AG04450 (cell line): ENCODE measurements at regions of chr16 and their contacts with region 1.

Region 1: GRCh38 chr16:1929578-1930337 is 11.5 kb upstream of the HS3ST6 start:
- DNase-seq: peak; percentile 32
- H3K4me3 ChIP-seq: peak overlapping the region; percentile 63
- H3K27ac ChIP-seq: no peak overlapping the region
- H3K27me3 ChIP-seq: peaks cover 9% of the 10 kb centered on the region
- CTCF ChIP-seq: peak; percentile 61

Region 2: GRCh38 chr16:1492923-1493745 is 436.6 kb before region 1 on chr16 and contains the start of gene TELO2:
- CTCF ChIA-PET with region 1: no interaction called
- POLR2A ChIA-PET with region 1: no interaction called
- DNase-seq: peak; percentile 42
- H3K4me3 ChIP-seq: peak within 1 kb of the TSS; percentile 75
- H3K27ac ChIP-seq: peak within 1 kb of the TSS; percentile 47
- H3K27me3 ChIP-seq: no peaks in the 10 kb centered on the region
- CTCF ChIP-seq: no peak
- polyA plus RNA-seq, gene TELO2: 6.2 and 7.4 TPM in 2 replicates

Region 3: GRCh38 chr16:1858189-1858865 is 71.4 kb before region 1 on chr16:
- CTCF ChIA-PET with region 1: interaction called, 83 read pairs
- POLR2A ChIA-PET with region 1: no interaction called
- DNase-seq: no peak
- H3K4me3 ChIP-seq: no peak overlapping the region
- H3K27ac ChIP-seq: no peak overlapping the region
- H3K27me3 ChIP-seq: peaks cover 44% of the 10 kb centered on the region
- CTCF ChIP-seq: no peak

Region 4: GRCh38 chr16:1863681-1864460 is 65.9 kb before region 1 on chr16:
- CTCF ChIA-PET with region 1: interaction called, 83 read pairs
- POLR2A ChIA-PET with region 1: no interaction called
- DNase-seq: no peak
- H3K4me3 ChIP-seq: no peak overlapping the region
- H3K27ac ChIP-seq: no peak overlapping the region
- H3K27me3 ChIP-seq: peaks cover 25% of the 10 kb centered on the region
- CTCF ChIP-seq: peak; percentile 60

Region 5: DNA sequence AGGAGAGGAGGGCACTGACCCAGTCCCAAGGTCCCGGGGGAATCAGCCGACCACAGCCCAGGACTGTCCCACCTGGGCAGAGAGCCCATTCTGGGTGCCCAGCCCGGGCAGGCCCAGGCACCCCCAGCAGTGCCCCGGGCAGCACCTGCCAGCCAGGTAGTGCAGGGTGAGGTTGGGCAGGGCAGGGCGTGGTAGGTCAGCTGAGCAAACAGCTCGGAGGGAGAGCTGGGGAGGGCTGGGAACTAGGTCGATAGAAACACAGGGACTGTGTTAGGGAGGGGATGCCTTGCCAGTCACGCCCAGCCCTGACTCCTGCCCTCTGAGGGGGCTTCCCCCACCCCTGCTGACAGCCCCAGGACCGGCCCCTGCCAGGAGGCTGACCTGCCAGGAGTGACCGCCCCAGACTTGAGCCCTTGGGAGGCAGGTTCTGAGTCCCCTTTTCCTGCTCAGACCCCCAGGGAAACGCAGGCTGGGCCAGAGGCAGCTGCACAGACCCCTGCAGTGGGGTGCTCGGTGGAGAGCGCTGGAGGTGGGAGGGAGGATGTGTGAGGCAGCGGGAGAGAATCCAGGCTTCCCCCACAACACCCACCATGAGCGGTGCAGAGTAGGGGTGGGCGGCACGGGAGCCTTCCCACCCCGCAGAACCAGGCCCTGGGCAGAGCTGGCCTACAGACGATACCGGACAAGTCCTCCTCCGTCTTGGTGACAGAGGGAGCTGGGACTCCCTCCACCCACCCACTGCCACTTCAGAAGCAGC is 16.3 kb before region 1 on chr16:
- CTCF ChIA-PET with region 1: no interaction called
- POLR2A ChIA-PET with region 1: no interaction called
- DNase-seq: no peak
- H3K4me3 ChIP-seq: no peak overlapping the region
- H3K27ac ChIP-seq: no peak overlapping the region
- H3K27me3 ChIP-seq: peaks cover 62% of the 10 kb centered on the region
- CTCF ChIP-seq: no peak

Region 6: DNA sequence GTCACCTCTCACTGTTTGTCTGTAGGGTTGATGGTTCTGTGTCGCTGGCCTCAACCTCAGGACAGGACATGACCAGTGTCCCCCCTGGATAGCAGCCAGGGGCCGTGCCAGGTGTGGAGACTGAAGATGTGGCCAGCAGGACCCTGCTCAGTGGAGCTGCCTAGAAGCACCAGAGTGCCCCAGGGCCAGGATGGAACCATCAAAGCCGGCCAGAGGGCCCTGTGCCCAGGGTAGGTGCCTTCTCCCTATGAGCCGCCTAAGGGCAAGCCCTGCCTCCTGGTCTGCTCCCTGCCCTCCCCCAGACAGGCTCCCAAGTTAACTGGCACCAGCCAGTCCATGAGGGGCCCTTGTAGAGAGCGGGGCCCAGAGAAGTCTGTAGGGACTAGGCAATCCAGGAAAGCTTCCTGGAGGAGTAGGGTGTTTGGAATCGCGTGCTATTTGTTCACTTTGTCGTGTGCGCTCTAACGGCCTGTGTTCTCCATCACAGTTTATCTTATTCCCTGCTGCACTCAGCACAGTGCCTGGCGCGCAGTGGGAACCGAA is 29.0 kb after region 1 on chr16:
- CTCF ChIA-PET with region 1: no interaction called
- POLR2A ChIA-PET with region 1: no interaction called
- DNase-seq: no peak
- H3K4me3 ChIP-seq: peak overlapping the region; percentile 43
- H3K27ac ChIP-seq: peak overlapping the region; percentile 21
- H3K27me3 ChIP-seq: no peaks in the 10 kb centered on the region
- CTCF ChIP-seq: no peak